PC-9 (cell line): ENCODE measurements at regions of chr1 and their contacts with region 1.

Region 1: GRCh38 chr1:35777109-35777508 is 7.3 kb upstream of the CLSPN start:
- DNase-seq: no peak
- H3K4me3 ChIP-seq: no peak overlapping the region
- H3K27ac ChIP-seq: no peak overlapping the region
- H3K4me1 ChIP-seq: no peaks in the 10 kb centered on the region
- H3K27me3 ChIP-seq: no peaks in the 10 kb centered on the region
- CTCF ChIP-seq: no peak

Region 2: DNA sequence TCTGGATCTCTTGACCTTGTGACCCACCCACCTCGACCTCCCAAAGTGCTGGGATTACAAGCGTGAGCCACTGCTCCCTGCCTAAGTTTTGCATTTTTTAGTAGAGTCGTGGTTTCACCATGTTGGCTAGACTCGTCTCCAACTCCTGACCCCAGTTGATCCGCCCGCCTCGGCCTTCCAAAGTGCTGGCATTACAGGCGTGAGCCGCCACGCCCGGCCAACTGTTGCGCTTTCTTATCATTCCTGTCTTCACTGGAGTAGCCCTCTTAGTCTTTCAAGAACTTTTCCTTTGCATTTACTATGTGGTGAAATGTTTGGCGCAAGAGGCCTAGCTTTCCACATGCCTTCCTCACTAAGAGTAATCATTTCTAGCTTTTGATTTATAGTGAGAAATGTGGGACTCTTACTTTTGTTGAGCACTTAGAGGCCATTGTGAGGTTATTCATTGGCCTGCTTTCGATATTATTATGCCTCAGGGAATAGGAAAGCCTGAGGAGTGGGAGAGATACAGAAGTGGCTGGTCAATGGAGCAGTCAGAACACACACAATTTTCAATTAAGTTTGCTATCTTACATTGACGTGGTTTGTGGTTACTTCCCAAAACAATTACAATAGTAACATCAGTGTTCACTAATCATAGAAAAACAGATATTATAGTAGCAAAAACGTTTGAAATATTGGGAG is 397.6 kb before region 1 on chr1:
- CTCF ChIA-PET with region 1: no interaction called
- POLR2A ChIA-PET with region 1: no interaction called
- intact Hi-C with region 1: no loop called
- DNase-seq: no peak
- H3K4me3 ChIP-seq: no peak overlapping the region
- H3K27ac ChIP-seq: no peak overlapping the region
- H3K4me1 ChIP-seq: no peaks in the 10 kb centered on the region
- H3K27me3 ChIP-seq: no peaks in the 10 kb centered on the region
- CTCF ChIP-seq: no peak

Region 3: GRCh38 chr1:35451125-35451528 is 326.0 kb before region 1 on chr1:
- CTCF ChIA-PET with region 1: no interaction called
- POLR2A ChIA-PET with region 1: no interaction called
- intact Hi-C with region 1: loop called (anchors 1 kb)
- DNase-seq: peak; percentile 47 to 72
- H3K4me3 ChIP-seq: no peak overlapping the region
- H3K27ac ChIP-seq: no peak overlapping the region
- H3K4me1 ChIP-seq: peaks cover 19% of the 10 kb centered on the region
- H3K27me3 ChIP-seq: no peaks in the 10 kb centered on the region
- CTCF ChIP-seq: peak; percentile 89

Region 4: GRCh38 chr1:35537806-35538205 is 239.3 kb before region 1 on chr1:
- CTCF ChIA-PET with region 1: interaction called, 16 read pairs
- POLR2A ChIA-PET with region 1: no interaction called
- intact Hi-C with region 1: no loop called
- DNase-seq: no peak
- H3K4me3 ChIP-seq: no peak overlapping the region
- H3K27ac ChIP-seq: no peak overlapping the region
- H3K4me1 ChIP-seq: peaks cover 5% of the 10 kb centered on the region; the same call in 1 of the 2 replicates
- H3K27me3 ChIP-seq: no peaks in the 10 kb centered on the region
- CTCF ChIP-seq: no peak

Region 5: DNA sequence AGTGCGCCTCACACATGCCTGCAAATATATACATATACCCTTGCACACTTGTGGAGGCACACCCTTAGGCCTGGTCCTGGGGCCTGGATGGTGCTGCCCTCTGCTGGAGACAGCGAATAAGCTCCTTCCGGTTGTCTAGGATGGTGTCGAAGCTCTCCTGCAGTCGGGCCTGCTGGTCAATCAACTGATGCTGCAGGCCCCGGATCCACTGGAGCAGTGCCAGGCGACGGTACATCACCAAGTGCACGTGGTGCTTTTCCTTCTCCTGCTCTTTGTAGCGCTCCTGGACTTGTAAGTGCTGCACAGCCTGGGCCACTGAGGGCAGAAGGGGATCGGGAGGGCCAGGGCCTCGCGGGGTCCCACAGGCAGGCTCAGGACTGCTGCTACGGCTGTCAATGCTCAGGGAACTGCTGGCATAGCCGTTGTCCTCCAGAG is 61.5 kb before region 1 on chr1:
- CTCF ChIA-PET with region 1: no interaction called
- POLR2A ChIA-PET with region 1: no interaction called
- intact Hi-C with region 1: no loop called
- DNase-seq: peak; percentile 41 to 61
- H3K4me3 ChIP-seq: no peak overlapping the region
- H3K27ac ChIP-seq: no peak overlapping the region
- H3K4me1 ChIP-seq: no peaks in the 10 kb centered on the region
- H3K27me3 ChIP-seq: no peaks in the 10 kb centered on the region
- CTCF ChIP-seq: peak; percentile 87

Region 6: DNA sequence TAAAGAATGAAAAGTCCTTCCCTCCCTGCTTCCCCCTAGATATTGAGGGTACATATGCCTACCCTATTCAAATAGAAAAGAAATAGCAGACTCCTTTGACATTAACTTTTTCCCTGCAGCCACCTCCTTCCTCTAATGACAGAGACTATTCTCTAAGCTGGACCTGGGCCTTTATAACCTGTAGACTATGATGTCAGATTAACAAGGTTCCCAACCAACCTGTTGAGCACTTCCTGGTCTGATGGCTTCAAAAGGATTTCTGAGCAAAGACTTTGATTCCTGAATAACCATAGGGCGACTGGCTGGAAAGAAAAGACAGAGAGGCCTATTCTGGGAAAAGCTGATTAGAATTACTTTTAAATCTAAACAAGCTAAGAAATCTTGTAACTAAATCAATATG is 40.0 kb before region 1 on chr1:
- CTCF ChIA-PET with region 1: no interaction called
- POLR2A ChIA-PET with region 1: interaction called, 11 read pairs
- intact Hi-C with region 1: no loop called
- DNase-seq: no peak
- H3K4me3 ChIP-seq: no peak overlapping the region
- H3K27ac ChIP-seq: no peak overlapping the region
- H3K4me1 ChIP-seq: no peaks in the 10 kb centered on the region
- H3K27me3 ChIP-seq: no peaks in the 10 kb centered on the region
- CTCF ChIP-seq: no peak

Region 7: DNA sequence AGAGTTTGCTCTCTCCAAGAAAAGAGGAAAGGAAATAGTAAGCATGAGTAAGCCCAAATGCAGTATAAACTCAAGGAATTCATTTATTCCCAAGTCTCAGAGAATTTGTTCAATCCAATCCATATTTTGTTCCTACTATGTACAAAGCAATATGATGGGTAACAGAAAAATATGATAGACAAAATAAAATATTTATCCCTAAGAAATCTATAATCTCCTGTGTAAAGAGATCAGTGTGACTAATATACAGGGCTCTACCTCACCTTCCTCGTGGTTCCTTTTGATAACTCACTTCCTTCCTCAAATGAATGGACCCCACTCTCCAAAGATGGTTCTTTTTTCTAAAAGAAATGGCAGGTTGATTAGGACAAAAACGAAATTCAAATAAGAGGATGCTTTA is 15.0 kb before region 1 on chr1:
- CTCF ChIA-PET with region 1: no interaction called
- POLR2A ChIA-PET with region 1: no interaction called
- intact Hi-C with region 1: no loop called
- DNase-seq: no peak
- H3K4me3 ChIP-seq: no peak overlapping the region
- H3K27ac ChIP-seq: no peak overlapping the region
- H3K4me1 ChIP-seq: no peaks in the 10 kb centered on the region
- H3K27me3 ChIP-seq: no peaks in the 10 kb centered on the region
- CTCF ChIP-seq: no peak

Region 8: GRCh38 chr1:36008546-36009197 is 231.6 kb after region 1 on chr1:
- CTCF ChIA-PET with region 1: no interaction called
- POLR2A ChIA-PET with region 1: no interaction called
- intact Hi-C with region 1: no loop called
- DNase-seq: peak; percentile 57 to 87
- H3K4me3 ChIP-seq: no peak overlapping the region
- H3K27ac ChIP-seq: peak overlapping the region; percentile 71
- H3K4me1 ChIP-seq: peaks cover 18% of the 10 kb centered on the region
- H3K27me3 ChIP-seq: no peaks in the 10 kb centered on the region
- CTCF ChIP-seq: no peak